ENCODE measurements at regions of chr1 and their contacts with region 1.

Region 1: DNA sequence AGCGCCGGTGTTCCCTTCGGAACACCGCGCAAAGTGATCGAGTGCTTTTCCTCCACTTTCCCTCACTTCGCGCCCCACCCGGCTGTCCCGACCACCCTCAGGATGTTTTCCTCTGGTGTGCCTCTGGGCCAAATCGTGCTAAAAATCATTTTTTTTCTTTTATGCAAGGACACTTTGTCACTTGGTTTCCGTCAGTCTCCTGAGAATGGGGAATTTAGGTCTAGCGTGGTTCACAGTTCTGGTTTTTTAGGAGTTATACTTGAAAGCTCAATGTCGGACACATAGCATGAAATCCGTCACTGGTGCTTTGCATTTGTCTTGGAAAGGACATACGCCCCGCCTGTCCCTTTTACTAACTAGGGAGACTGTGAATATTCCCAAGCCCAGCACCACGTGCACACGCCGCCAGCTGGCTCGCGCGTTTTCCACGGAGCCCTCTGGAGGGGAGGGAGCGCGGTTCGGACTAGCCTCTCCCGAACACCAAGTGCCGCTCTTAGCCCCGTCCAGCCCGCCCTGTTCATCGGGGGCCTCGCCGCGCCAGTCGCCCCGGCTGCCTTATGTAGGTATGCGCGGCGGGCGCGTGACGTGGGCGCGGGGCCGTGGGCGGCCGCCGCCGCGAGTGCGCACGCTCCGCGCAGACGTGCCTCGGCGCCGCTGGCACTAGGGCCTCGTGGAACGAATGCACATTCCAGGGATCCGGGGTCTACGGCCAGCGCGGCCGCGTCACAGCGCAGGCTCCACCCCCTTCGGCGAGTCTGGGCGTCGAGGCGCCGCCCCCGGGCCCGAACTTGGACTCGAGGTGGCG is 572 bp upstream of the IRF2BP2 start:
- DNase-seq: peak; percentile 89 to 98 (median 95)

Region 2: GRCh38 chr1:234499119-234499942 is 111.2 kb before region 1 on chr1:
- intact Hi-C with region 1: loop called (anchors 2 kb)
- DNase-seq: peak; percentile 88 to 98 (median 95)

Region 3: DNA sequence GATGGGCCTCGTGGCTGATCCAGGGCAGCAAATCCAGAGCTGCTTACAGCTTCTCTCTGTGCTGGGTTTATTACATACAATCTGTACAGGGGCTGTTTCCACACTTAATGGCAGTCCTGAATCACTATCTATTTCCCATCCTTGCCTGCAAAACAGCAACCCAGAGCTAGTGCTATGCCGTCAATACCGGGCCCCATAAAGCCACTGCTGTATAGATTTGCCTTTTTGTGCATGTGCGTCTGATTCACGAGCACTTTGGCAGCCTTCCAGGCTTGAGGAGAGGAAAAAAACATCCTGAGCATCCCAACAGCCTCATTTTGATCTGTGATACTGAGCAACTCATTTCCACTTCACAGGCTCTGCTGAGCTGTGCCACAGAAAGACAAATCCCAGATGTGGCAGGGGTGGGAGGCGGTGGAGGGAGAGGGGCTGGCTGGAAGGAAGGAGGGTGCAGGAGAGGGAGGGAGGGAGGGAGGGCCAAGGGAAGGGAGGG is 66.4 kb before region 1 on chr1:
- intact Hi-C with region 1: loop called (anchors 2 kb)
- DNase-seq: peak; percentile 56 to 92 (median 82)

Region 4: DNA sequence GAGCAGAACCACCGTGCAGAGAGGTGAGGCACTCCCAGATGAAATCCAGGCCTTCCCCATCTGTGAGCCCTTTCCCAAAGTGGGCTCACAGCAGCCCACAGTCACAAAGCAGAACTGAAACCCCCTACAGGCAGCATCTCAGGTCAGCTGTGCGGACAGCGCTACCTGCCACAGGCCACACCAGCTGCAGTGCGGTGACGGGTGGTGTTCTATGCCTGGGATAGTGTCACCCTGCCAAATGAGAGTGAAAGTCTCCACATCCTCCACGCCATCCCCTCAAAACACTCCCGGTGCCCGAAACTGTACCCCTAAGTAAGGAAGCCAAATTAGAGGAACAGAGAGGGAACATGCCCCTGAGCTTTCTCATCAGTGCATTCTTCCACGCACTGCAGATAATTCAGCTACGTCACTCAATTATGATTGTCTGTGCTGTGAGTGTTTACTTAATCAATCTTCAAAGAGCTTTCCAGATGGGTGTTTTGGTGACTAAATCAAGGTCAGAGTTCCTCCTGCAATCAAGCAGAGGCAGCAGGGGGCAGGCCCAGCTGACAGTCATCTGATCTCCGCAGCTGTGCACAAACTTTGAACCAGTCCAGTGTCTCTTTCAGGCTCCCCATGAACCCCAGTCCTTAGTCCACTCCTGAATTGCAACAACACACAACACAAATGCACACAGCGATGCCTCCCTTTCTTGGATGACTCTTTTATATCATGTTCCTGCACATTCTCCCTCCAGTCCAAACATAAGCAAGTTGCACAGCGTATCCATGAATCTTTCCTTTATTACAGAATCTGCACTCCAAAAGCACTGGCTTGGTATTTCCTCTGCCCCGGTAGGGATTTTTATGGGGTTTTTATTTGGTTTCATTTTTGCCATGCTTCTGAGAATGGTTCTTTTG is 368.1 kb after region 1 on chr1:
- intact Hi-C with region 1: loop called (anchors 5 kb)
- DNase-seq: peak in 41 of 42 donors; percentile 57 to 93 (median 82)

Region 5: GRCh38 chr1:235075188-235075926 is 464.8 kb after region 1 on chr1:
- intact Hi-C with region 1: loop called (anchors 5 kb)
- DNase-seq: peak in 28 of 42 donors; percentile 19 to 80 (median 47)

Measured in head of caudate nucleus (tissue), 42 donors.